Activated T-helper 2 cell treated with anti-CD3 and anti-CD28 coated beads, Interferon-gamma antibody, Interleukin-2, Interleukin-4, amounts not matched to agents 10 μg/mL and 5 μg/mL and 100 μg/mL, durations not matched to agents 14 hours and 24 hours and 36 hours (primary cell): ENCODE measurements at regions of chr1 and their contacts with region 1.

Region 1: GRCh38 chr1:18681423-18681835 is 50.8 kb downstream of the PAX7 start:
- DNase-seq: no peak
- H3K4me3 Mint-ChIP-seq: no peak overlapping the region
- H3K27ac Mint-ChIP-seq: no peak overlapping the region
- H3K4me1 Mint-ChIP-seq: peaks cover 1% of the 10 kb centered on the region
- H3K27me3 Mint-ChIP-seq: peaks cover 2% of the 10 kb centered on the region

Region 2: GRCh38 chr1:18597160-18598042 is 84.0 kb before region 1 on chr1:
- intact Hi-C with region 1: loop called (anchors 2 kb)
- DNase-seq: peak; percentile 16
- H3K4me3 Mint-ChIP-seq: no peak overlapping the region
- H3K27ac Mint-ChIP-seq: no peak overlapping the region
- H3K4me1 Mint-ChIP-seq: no peaks in the 10 kb centered on the region
- H3K27me3 Mint-ChIP-seq: peaks cover 12% of the 10 kb centered on the region

Region 3: DNA sequence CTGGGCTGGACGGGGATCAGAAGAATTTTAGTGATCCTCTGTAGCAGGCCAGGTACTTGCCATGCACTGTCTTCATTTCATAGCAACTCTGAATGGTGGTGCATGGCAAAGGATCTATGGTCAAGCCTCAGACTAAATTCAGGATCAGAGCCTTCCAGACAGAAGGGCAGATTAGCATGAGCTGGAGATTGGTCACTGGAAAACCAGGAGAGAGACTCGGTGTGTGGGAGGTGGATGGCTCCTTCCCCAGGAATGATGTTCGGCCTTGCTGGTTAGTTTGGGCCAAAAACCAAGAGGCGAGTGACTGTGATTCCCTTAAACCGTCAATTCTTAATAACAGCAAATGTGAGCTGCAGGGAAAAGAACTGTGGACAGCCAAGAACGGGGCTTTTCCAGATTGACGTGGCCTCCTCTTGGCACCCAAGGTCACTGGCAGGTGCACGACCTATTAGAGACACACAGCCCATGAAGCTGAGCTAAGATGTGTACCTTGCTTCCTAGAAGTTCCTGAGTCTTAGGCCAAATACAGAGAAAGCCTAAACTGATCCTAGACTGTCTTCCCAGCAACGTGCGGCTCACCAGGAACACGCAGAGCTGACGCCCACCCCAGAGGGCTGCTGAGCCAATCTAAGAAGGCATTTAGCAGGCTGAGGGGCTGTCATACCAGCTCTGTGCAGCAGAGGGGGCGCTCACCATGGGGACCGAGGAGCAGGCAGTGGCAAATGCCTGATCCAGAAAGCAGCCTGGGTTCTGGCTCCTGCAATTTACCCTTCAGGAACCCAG is 202.4 kb after region 1 on chr1:
- intact Hi-C with region 1: no loop called
- DNase-seq: peak; percentile 50
- H3K4me3 Mint-ChIP-seq: no peak overlapping the region
- H3K27ac Mint-ChIP-seq: no peak overlapping the region
- H3K4me1 Mint-ChIP-seq: no peaks in the 10 kb centered on the region
- H3K27me3 Mint-ChIP-seq: no peaks in the 10 kb centered on the region